Right lobe of liver (tissue), 6 donors: ENCODE measurements at regions of chr3 and their contacts with region 1.

Region 1: GRCh38 chr3:100316641-100317069 is 17.9 kb upstream of the NIT2 start:
- DNase-seq: peak; percentile 46 to 71 (median 66)
- ATAC-seq: peak; percentile 97 to 99 (median 98)
- H3K4me3 ChIP-seq: no peak overlapping the region
- H3K27ac ChIP-seq: peak overlapping the region in 2 of 3 donors; percentile 35 to 51
- H3K4me1 ChIP-seq: peaks cover 0 to 15% (median 3%) of the 10 kb centered on the region in 4 donors
- H3K27me3 ChIP-seq: no peaks in the 10 kb centered on the region
- CTCF ChIP-seq: peak; percentile 77 to 86 (median 79)
- POLR2A ChIP-seq: no peak

Region 2: GRCh38 chr3:100125161-100125938 is 191.3 kb before region 1 on chr3:
- intact Hi-C with region 1: no loop called
- DNase-seq: no peak
- ATAC-seq: no peak
- H3K4me3 ChIP-seq: no peak overlapping the region
- H3K27ac ChIP-seq: no peak overlapping the region
- H3K4me1 ChIP-seq: no peaks in the 10 kb centered on the region
- H3K27me3 ChIP-seq: no peaks in the 10 kb centered on the region
- CTCF ChIP-seq: no peak
- POLR2A ChIP-seq: no peak

Region 3: GRCh38 chr3:100175637-100176280 is 140.9 kb before region 1 on chr3:
- intact Hi-C with region 1: no loop called
- DNase-seq: no peak
- ATAC-seq: no peak
- H3K4me3 ChIP-seq: no peak overlapping the region
- H3K27ac ChIP-seq: no peak overlapping the region
- H3K4me1 ChIP-seq: no peaks in the 10 kb centered on the region
- H3K27me3 ChIP-seq: no peaks in the 10 kb centered on the region
- CTCF ChIP-seq: no peak
- POLR2A ChIP-seq: no peak

Region 4: GRCh38 chr3:100710261-100710968 is 393.8 kb after region 1 on chr3:
- intact Hi-C with region 1: loop called in 1 of 2 experiments (anchors 10 kb)
- DNase-seq: peak in 1 of 3 donors; percentile 27
- ATAC-seq: peak in 1 of 4 donors; percentile 9
- H3K4me3 ChIP-seq: peak overlapping the region; percentile 61 to 87 (median 71)
- H3K27ac ChIP-seq: peak overlapping the region; percentile 95 to 97 (median 97)
- H3K4me1 ChIP-seq: peaks cover 0 to 23% (median 8%) of the 10 kb centered on the region in 4 donors
- H3K27me3 ChIP-seq: no peaks in the 10 kb centered on the region
- CTCF ChIP-seq: peak in 1 of 4 donors; percentile 9
- POLR2A ChIP-seq: no peak